ENCODE measurements at regions of chr14 and their contacts with region 1.

Region 1: GRCh38 chr14:22570132-22570949 is 18.7 kb downstream of the DAD1 start:
- DNase-seq: peak; percentile 96
- H3K4me3 Mint-ChIP-seq: peak overlapping the region; percentile 92
- H3K27ac Mint-ChIP-seq: peak overlapping the region; percentile 95
- H3K4me1 Mint-ChIP-seq: peaks cover 59% of the 10 kb centered on the region
- H3K27me3 Mint-ChIP-seq: no peaks in the 10 kb centered on the region

Region 2: GRCh38 chr14:21917699-21918436 is 652.5 kb before region 1 on chr14:
- intact Hi-C with region 1: loop called (anchors 1 kb)
- DNase-seq: peak; percentile 90
- H3K4me3 Mint-ChIP-seq: peak overlapping the region; percentile 76
- H3K27ac Mint-ChIP-seq: peak overlapping the region; percentile 74
- H3K4me1 Mint-ChIP-seq: peaks cover 47% of the 10 kb centered on the region
- H3K27me3 Mint-ChIP-seq: no peaks in the 10 kb centered on the region

Region 3: GRCh38 chr14:22589096-22589839 is 18.9 kb after region 1 on chr14 and contains the start of gene DAD1:
- intact Hi-C with region 1: loop called (anchors 1 kb)
- DNase-seq: peak; percentile 100
- H3K4me3 Mint-ChIP-seq: peak within 1 kb of the TSS; percentile 87
- H3K27ac Mint-ChIP-seq: peak within 1 kb of the TSS; percentile 99
- H3K4me1 Mint-ChIP-seq: peaks cover 49% of the 10 kb centered on the region
- H3K27me3 Mint-ChIP-seq: peaks cover 10% of the 10 kb centered on the region
- total RNA-seq, gene DAD1: 255 and 266 TPM in 2 replicates

Region 4: DNA sequence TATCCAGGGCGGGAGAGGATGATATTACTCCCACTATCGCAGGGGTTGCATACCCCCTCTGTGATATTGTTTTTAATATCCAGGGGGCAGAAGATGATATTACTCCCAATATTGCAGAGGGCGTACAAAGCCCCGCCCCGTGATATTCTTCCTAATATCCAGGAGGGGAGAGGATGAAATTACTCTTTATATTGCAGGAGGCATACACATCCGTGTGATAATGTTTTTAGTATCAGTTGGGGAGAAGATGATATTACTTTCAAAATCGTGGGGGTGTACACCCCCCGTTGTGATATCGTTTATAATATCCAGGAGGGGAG is 143.2 kb after region 1 on chr14:
- intact Hi-C with region 1: loop called (anchors 2 kb)
- DNase-seq: no peak
- H3K4me3 Mint-ChIP-seq: peak overlapping the region; percentile 88
- H3K27ac Mint-ChIP-seq: peak overlapping the region; percentile 89
- H3K4me1 Mint-ChIP-seq: peaks cover 14% of the 10 kb centered on the region
- H3K27me3 Mint-ChIP-seq: peaks cover 19% of the 10 kb centered on the region

Region 5: DNA sequence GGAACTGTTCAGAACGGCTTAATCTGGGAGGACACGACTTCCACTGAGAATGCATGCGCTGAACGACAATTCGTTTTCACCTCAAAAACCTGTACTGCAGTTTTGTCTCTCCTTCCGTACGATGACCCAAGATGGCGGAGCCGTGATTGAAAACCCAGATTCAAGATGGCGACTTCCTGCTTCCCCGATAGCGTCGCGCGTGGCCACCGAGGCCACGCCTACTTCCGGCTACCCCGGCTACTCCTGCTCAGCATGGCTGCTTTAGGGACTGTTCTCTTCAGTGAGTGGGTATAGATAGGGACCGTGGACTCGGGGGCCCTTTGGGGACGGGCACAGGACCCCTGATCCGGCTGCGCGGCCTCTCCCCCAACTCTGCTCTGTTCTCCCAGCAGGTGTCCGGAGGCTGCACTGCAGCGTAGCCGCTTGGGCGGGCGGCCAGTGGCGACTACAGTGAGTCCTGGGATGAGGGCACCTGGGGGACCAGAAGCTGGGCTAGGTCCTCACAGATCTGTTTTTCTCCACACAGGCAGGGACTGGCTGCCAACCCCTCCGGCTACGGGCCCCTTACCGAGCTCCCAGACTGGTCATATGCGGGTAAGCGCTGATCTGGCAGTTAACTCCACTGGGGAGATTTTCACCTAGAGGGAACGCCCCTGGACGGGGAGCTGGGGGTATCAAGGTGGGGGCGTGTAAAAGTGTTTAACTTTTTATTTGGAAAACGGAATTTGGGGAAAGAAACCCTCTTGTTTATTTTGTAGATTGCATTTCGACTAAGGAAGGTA is 259.5 kb after region 1 on chr14 and contains the start of gene MRPL52:
- intact Hi-C with region 1: loop called (anchors 1 kb)
- DNase-seq: peak; percentile 96
- H3K4me3 Mint-ChIP-seq: peak within 1 kb of the TSS; percentile 98
- H3K27ac Mint-ChIP-seq: peak within 1 kb of the TSS; percentile 95
- H3K4me1 Mint-ChIP-seq: peaks cover 19% of the 10 kb centered on the region
- H3K27me3 Mint-ChIP-seq: no peaks in the 10 kb centered on the region
- total RNA-seq, gene MRPL52: 189 and 194 TPM in 2 replicates

Region 6: DNA sequence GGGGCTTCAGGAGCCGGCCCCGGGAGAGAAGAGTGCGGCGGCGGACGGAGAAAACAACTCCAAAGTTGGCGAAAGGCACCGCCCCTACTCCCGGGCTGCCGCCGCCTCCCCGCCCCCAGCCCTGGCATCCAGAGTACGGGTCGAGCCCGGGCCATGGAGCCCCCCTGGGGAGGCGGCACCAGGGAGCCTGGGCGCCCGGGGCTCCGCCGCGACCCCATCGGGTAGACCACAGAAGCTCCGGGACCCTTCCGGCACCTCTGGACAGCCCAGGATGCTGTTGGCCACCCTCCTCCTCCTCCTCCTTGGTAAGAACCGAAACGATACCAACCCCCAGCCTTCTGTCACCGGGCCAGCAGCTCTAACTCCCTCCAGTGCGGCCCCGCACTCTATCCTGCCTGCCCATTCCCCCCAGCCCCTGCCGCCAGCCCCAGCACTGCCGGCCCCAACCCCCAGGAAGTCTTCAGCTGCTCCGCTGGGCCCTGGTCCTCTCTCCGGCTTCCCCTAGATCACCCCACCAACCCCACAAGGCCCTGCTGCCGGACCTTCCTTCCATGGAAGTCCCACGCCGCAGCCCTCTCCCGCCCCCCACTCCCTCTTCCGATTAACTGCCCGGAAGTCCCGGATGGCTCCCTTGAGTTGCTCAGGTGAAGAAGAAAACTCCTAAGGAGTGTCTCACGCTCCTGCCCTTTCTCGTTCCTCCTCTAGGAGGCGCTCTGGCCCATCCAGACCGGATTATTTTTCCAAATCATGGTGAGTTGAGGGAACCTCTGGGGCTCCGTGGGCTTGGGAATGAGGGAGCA is 301.9 kb after region 1 on chr14:
- intact Hi-C with region 1: loop called (anchors 5 kb)
- DNase-seq: peak; percentile 93
- H3K4me3 Mint-ChIP-seq: peak overlapping the region; percentile 88
- H3K27ac Mint-ChIP-seq: peak overlapping the region; percentile 89
- H3K4me1 Mint-ChIP-seq: peaks cover 18% of the 10 kb centered on the region
- H3K27me3 Mint-ChIP-seq: no peaks in the 10 kb centered on the region

Region 7: GRCh38 chr14:22986508-22987054 is 416.2 kb after region 1 on chr14:
- intact Hi-C with region 1: loop called (anchors 2 kb)
- DNase-seq: peak; percentile 96
- H3K4me3 Mint-ChIP-seq: no peak overlapping the region
- H3K27ac Mint-ChIP-seq: no peak overlapping the region
- H3K4me1 Mint-ChIP-seq: no peaks in the 10 kb centered on the region
- H3K27me3 Mint-ChIP-seq: no peaks in the 10 kb centered on the region